AG04449 (cell line): ENCODE measurements at regions of chr16 and their contacts with region 1.

Region 1: DNA sequence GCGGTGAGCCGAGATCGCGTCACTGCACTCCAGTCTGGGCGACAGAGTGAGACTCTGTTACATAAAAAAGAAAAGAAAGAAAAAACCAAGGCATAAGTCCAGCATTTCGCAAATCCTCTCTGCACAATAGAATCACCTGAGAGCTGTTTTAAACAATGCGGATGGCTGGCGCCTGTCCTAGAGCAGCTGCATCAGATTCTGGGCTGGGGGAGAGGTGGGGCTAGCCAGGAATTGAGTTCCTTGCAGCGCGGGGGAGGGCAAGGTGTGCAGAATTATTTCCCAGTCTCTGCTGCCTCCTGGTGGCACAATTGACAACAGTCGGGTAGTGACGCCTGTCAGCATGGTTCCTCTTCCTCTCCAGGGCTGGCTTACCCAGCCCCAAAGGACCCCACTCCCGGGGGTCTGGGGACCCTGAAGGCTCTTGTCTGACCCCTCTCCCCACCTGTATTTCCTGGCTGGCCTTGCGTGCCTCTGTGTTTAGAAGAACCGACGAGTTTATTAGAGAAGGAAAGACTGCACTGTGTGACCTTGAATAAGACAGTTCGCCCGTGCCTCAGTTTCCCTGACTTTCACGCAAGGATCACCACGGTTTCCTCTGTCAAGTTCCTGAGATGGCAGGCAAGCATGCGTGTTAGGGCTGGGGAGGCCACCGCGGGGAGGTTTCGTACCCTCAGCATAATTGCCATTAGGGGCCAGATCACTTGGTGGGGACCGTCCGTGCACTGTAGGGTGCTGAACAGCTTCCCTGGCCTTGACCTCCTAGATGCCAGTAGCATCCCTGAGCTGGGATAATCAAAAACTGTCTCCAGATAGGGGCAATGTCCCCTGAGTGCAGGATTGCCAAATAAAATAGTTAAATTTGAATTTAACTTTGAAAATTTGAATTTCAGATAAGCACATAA is 41.0 kb upstream of the PLCG2 start:
- DNase-seq: no peak
- H3K4me3 ChIP-seq: peak overlapping the region; percentile 43
- CTCF ChIP-seq: peak; percentile 82

Region 2: GRCh38 chr16:81204798-81205680 is 533.1 kb before region 1 on chr16:
- CTCF ChIA-PET with region 1: interaction called, 13 read pairs
- POLR2A ChIA-PET with region 1: no interaction called
- DNase-seq: peak; percentile 9
- H3K4me3 ChIP-seq: no peak overlapping the region
- CTCF ChIP-seq: peak; percentile 71

Region 3: GRCh38 chr16:81752225-81752875 is 14.2 kb after region 1 on chr16:
- CTCF ChIA-PET with region 1: interaction called, 14 read pairs
- POLR2A ChIA-PET with region 1: no interaction called
- DNase-seq: no peak
- H3K4me3 ChIP-seq: no peak overlapping the region
- CTCF ChIP-seq: no peak

Region 4: DNA sequence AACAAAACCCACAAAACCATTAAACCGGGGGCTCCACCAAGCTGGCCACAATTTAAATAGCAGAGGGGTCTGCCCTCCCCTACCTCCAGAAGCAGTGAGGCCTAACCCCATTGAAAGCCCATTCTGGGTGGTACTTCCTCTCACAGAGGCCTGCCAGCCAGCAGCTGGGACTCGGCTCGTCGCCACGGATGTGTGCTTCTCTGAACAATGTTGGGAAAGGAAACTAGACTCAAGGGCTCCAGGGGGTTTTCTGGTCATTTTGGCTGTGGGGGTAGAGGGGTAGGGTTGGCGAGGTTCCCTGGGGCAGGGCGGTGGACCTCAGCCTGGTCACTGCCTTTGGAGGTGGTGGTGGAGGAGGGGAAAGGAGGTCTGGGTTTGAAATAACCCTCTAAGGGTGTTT is 36.2 kb after region 1 on chr16:
- CTCF ChIA-PET with region 1: no interaction called
- POLR2A ChIA-PET with region 1: no interaction called
- DNase-seq: no peak
- H3K4me3 ChIP-seq: no peak overlapping the region
- CTCF ChIP-seq: no peak